ENCODE measurements at regions of chr19 and their contacts with region 1.

Region 1: GRCh38 chr19:52189735-52190486 is at the start of gene PPP2R1A:
- DNase-seq: peak; percentile 99 to 100 (median 100)
- ATAC-seq: peak; percentile 95
- H3K4me3 ChIP-seq: peak within 1 kb of the TSS; percentile 82
- H3K27ac ChIP-seq: peak within 1 kb of the TSS; percentile 99
- H3K4me1 ChIP-seq: peaks cover 7 to 14% of the 10 kb centered on the region in 2 experiments; a peak in 3 of 5 replicates
- H3K27me3 ChIP-seq: no peaks in the 10 kb centered on the region
- CTCF ChIP-seq: no peak
- EP300 ChIP-seq: no peak
- POLR2A ChIP-seq: peak; percentile 95
- RAD21 ChIP-seq: no peak
- polyA plus RNA-seq, gene PPP2R1A: 10.1 to 16.0 TPM

Region 2: GRCh38 chr19:52139252-52140031 is 50.5 kb before region 1 on chr19 and contains the start of gene ZNF616:
- CTCF ChIA-PET with region 1: no interaction called
- POLR2A ChIA-PET with region 1: no interaction called
- in situ Hi-C with region 1: no loop called
- intact Hi-C with region 1: loop called (anchors 5 kb)
- DNase-seq: peak; percentile 80 to 97 (median 83)
- ATAC-seq: peak; percentile 98
- H3K4me3 ChIP-seq: peak within 1 kb of the TSS; percentile 76
- H3K27ac ChIP-seq: peak within 1 kb of the TSS; percentile 93
- H3K4me1 ChIP-seq: peaks cover 12% of the 10 kb centered on the region in 2 experiments; a peak in 4 of 5 replicates
- H3K27me3 ChIP-seq: no peaks in the 10 kb centered on the region
- CTCF ChIP-seq: peak; percentile 80 to 91 (median 86)
- EP300 ChIP-seq: peak; percentile 10; the same call in 1 of the 2 replicates
- POLR2A ChIP-seq: peak; percentile 90
- RAD21 ChIP-seq: peak; percentile 68 to 80
- polyA plus RNA-seq, gene ZNF616: 3.4 to 6.5 TPM

Region 3: DNA sequence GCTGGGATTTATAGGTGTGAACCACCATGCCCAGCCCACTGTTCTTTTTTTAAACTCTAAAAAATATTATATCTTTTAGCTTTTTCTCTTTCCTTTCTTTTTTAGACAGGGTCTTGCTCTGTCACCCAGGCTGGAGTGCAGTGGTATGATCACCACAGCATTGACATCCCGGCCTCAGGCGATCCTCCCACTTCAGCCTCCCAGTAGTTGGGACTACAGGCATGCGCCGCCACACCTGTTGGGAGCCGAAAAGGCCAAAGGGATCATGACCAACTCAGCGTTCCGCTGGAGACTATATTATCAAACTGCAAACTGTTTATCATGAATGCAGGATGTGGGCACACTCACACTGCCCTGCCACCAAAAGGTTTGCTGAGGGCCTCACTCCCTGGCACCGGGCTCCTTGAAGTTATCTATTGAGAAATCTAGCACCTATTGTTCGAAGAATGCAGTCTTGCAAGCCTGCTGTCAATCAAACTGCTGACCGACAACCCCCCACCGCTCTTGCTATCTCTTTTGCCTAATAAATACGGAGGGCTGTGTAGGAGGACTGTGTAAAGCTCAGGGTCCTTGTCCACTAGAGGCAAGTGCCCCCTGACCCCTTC is 13.4 kb before region 1 on chr19:
- CTCF ChIA-PET with region 1: no interaction called
- POLR2A ChIA-PET with region 1: interaction called, 11 read pairs
- in situ Hi-C with region 1: no loop called
- intact Hi-C with region 1: no loop called
- DNase-seq: no peak
- ATAC-seq: no peak
- H3K4me3 ChIP-seq: no peak overlapping the region
- H3K27ac ChIP-seq: no peak overlapping the region
- H3K4me1 ChIP-seq: no peaks in the 10 kb centered on the region; a peak in 1 of 5 replicates
- H3K27me3 ChIP-seq: no peaks in the 10 kb centered on the region
- CTCF ChIP-seq: no peak
- EP300 ChIP-seq: no peak
- POLR2A ChIP-seq: no peak
- RAD21 ChIP-seq: no peak

Region 4: DNA sequence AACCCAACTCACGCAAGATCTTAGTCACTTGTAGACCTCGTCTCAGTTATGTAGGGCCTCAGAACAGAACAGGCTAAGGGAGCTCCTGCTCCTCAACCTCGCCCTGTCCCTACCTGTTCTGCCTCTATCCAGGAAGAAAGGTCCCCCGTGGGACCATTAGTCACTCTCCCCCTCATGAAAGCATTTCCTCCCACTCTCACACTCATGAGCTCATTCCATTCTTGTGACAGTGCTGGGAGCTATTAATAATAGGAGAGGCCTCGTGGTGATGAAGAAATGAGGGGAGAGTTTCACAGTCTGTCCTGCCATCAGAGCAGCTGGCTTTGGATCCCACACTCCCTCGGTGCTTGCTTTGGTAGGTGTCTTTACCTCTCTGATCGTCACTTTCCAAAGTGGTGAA is 10.1 kb after region 1 on chr19:
- CTCF ChIA-PET with region 1: no interaction called
- POLR2A ChIA-PET with region 1: interaction called, 29 read pairs
- in situ Hi-C with region 1: no loop called
- intact Hi-C with region 1: no loop called
- DNase-seq: no peak
- ATAC-seq: no peak
- H3K4me3 ChIP-seq: no peak overlapping the region
- H3K27ac ChIP-seq: no peak overlapping the region
- H3K4me1 ChIP-seq: no peaks in the 10 kb centered on the region
- H3K27me3 ChIP-seq: no peaks in the 10 kb centered on the region
- CTCF ChIP-seq: no peak
- EP300 ChIP-seq: no peak
- POLR2A ChIP-seq: no peak
- RAD21 ChIP-seq: no peak